ENCODE measurements at regions of chr9 and their contacts with region 1.

Region 1: GRCh38 chr9:88835038-88835466 is 156.2 kb upstream of the S1PR3 start:
- DNase-seq: peak; percentile 12
- ATAC-seq: peak; percentile 89
- H3K4me3 Mint-ChIP-seq: no peak overlapping the region
- H3K27ac Mint-ChIP-seq: no peak overlapping the region
- H3K4me1 Mint-ChIP-seq: peaks cover 19% of the 10 kb centered on the region
- H3K27me3 Mint-ChIP-seq: peaks cover 67% of the 10 kb centered on the region
- CTCF ChIP-seq: no peak

Region 2: DNA sequence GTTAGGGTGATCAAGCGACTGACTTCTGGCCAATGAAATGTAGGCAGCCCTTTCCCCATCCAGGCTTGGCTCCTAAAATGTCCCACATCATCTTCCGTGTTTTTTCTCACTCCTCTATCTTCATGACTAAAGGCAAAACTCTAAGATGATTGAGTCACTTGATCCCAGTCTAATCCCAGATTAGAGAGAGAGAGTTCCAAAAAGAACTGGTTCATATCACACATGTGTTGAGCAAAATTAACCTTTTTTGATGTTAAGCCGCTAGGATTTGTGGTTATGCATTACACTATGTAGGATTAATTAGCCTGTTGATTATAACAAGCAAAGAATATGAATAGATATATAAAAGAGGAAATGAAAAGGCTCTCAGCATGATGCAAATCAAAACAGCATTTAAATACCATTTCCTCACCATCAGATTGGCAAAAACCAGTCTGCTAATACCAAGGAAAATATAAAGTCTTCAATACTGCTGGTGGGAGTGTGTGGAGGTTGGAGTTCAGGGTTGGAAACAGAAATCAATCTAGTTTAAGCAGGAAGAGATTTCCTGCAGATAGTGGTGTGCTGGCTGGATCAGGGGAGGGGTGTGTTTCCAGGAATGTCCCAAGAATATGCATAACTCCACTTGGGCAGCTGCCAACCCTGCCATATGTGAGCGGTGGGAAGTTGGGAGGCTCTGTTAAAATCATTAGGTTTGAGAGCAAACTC is 31.4 kb before region 1 on chr9:
- CTCF ChIA-PET with region 1: no interaction called
- POLR2A ChIA-PET with region 1: no interaction called
- intact Hi-C with region 1: no loop called
- DNase-seq: no peak
- ATAC-seq: no peak
- H3K4me3 Mint-ChIP-seq: no peak overlapping the region
- H3K27ac Mint-ChIP-seq: no peak overlapping the region
- H3K4me1 Mint-ChIP-seq: no peaks in the 10 kb centered on the region
- H3K27me3 Mint-ChIP-seq: peaks cover 22% of the 10 kb centered on the region
- CTCF ChIP-seq: no peak

Region 3: GRCh38 chr9:88991066-88992034 is 156.3 kb after region 1 on chr9 and contains the start of gene S1PR3:
- CTCF ChIA-PET with region 1: no interaction called
- POLR2A ChIA-PET with region 1: no interaction called
- intact Hi-C with region 1: loop called (anchors 10 kb)
- DNase-seq: peak; percentile 42
- ATAC-seq: peak; percentile 38
- H3K4me3 Mint-ChIP-seq: peak within 1 kb of the TSS; percentile 61
- H3K27ac Mint-ChIP-seq: no peak within 1 kb of the TSS
- H3K4me1 Mint-ChIP-seq: peaks cover 26% of the 10 kb centered on the region
- H3K27me3 Mint-ChIP-seq: peaks cover 26% of the 10 kb centered on the region
- CTCF ChIP-seq: no peak
- total RNA-seq, gene S1PR3: 0.36 to 0.58 TPM

Measured in activated CD8-positive, alpha-beta T cell treated with anti-CD3 and anti-CD28 coated beads for 36 hours (primary cell).